ENCODE measurements at regions of chr17 and their contacts with region 1.

Region 1: GRCh38 chr17:48985436-48986245 is 11.5 kb upstream of the IGF2BP1 start:
- DNase-seq: no peak
- H3K4me3 ChIP-seq: no peak overlapping the region
- H3K27ac ChIP-seq: peak overlapping the region; percentile 34
- H3K4me1 ChIP-seq: peaks cover 42% of the 10 kb centered on the region
- H3K27me3 ChIP-seq: no peaks in the 10 kb centered on the region
- CTCF ChIP-seq: no peak

Region 2: GRCh38 chr17:49508061-49508865 is 522.6 kb after region 1 on chr17:
- CTCF ChIA-PET with region 1: no interaction called
- POLR2A ChIA-PET with region 1: no interaction called
- intact Hi-C with region 1: loop called (anchors 10 kb)
- DNase-seq: no peak
- H3K4me3 ChIP-seq: no peak overlapping the region
- H3K27ac ChIP-seq: no peak overlapping the region
- H3K4me1 ChIP-seq: peaks cover 4% of the 10 kb centered on the region
- H3K27me3 ChIP-seq: no peaks in the 10 kb centered on the region
- CTCF ChIP-seq: no peak

Measured in A673 (cell line).